ENCODE measurements at regions of chr15 and their contacts with region 1.

Region 1: GRCh38 chr15:65245096-65245856 is 34.0 kb upstream of the CILP start:
- DNase-seq: no peak
- H3K4me3 Mint-ChIP-seq: no peak overlapping the region
- H3K27ac Mint-ChIP-seq: no peak overlapping the region
- H3K4me1 Mint-ChIP-seq: peaks cover 12% of the 10 kb centered on the region
- H3K27me3 Mint-ChIP-seq: no peaks in the 10 kb centered on the region

Region 2: DNA sequence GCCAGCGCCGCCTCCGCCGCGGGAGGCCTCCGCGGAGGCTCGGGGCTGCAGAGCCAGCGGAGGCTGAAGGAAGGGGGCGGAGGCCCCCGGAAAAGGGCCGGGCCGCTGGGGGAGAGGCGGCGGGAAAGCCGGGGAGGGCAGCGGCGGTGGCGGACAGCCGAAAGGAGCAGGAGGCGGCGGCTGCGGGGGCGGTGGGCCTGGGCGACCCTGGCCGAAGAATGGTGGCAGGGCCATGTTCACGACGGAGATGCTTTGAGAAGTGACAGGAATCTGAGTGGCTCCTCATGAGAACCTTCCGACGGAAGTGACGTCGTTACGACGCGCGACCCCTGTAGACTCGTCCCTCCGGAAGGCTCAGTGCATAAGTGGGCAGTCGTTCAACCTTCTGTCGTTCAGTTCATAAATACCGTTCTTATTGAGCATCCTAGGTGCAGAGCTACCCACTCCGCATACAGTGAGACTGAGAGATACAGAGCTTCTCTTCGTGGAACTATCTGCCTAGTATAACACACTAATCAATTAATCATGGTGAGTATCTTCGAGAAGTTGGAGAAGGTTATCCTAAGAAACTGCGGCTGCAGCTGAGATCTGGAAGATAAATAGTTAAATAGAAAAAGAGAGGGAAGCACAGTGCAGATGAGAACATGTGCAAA is 111.6 kb before region 1 on chr15 and contains the start of gene PDCD7:
- intact Hi-C with region 1: loop called (anchors 1 kb)
- DNase-seq: peak; percentile 80
- H3K4me3 Mint-ChIP-seq: peak within 1 kb of the TSS; percentile 92
- H3K27ac Mint-ChIP-seq: peak within 1 kb of the TSS; percentile 93
- H3K4me1 Mint-ChIP-seq: peaks cover 31% of the 10 kb centered on the region
- H3K27me3 Mint-ChIP-seq: peaks cover 2% of the 10 kb centered on the region
- total RNA-seq, gene PDCD7: 51.2 and 54.7 TPM in 2 replicates

Region 3: DNA sequence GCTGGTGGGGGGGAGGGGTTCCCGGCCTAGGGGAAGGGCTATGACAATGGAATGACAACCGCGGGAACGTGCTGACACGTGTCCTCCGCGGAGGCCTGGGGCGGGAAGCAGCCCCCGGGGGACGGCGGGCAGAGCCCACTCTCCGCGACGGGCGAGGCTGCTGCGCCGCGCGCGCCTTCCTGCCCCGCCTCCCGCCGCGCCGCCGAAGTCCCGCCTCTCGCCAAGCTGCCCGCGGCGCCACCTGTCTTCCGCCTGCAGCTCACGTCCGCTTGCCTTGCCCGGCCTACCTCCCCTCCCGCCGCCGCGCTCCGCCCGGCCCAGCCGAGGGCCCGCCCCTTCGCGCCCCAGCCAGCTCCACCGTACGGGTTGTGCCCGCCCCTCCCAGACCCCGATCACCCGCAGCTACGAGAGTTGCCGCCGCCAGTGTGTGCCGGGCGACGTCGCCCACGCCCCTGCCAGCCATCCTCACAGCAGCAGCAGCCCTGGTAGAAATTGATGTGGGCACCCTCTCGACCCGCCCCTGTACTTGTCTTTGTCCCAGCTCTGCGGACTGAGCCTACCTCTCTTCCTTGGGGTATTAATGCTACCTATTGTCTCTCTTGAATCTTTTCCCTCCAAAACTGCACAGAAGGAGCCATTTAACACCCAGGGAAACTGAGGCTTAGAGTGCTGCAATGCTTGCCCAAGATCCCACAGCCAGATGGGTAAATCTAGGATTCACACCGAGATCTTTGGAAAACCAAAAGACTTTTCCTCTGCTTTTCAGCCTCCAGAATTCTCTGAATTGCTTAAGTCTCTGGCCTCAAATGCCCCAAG is 41.6 kb after region 1 on chr15 and contains the start of gene PARP16:
- intact Hi-C with region 1: loop called (anchors 5 kb)
- DNase-seq: peak; percentile 90
- H3K4me3 Mint-ChIP-seq: peak within 1 kb of the TSS; percentile 86
- H3K27ac Mint-ChIP-seq: peak within 1 kb of the TSS; percentile 76
- H3K4me1 Mint-ChIP-seq: peaks cover 27% of the 10 kb centered on the region
- H3K27me3 Mint-ChIP-seq: no peaks in the 10 kb centered on the region
- total RNA-seq, gene PARP16: 12.4 and 14.0 TPM in 2 replicates

Region 4: GRCh38 chr15:65509321-65509720 is 264.0 kb after region 1 on chr15:
- intact Hi-C with region 1: no loop called
- DNase-seq: no peak
- H3K4me3 Mint-ChIP-seq: no peak overlapping the region
- H3K27ac Mint-ChIP-seq: peak overlapping the region; percentile 4
- H3K4me1 Mint-ChIP-seq: peaks cover 22% of the 10 kb centered on the region
- H3K27me3 Mint-ChIP-seq: no peaks in the 10 kb centered on the region

Region 5: GRCh38 chr15:66097151-66098021 is 852.1 kb after region 1 on chr15:
- intact Hi-C with region 1: no loop called
- DNase-seq: no peak
- H3K4me3 Mint-ChIP-seq: no peak overlapping the region
- H3K27ac Mint-ChIP-seq: no peak overlapping the region
- H3K4me1 Mint-ChIP-seq: no peaks in the 10 kb centered on the region
- H3K27me3 Mint-ChIP-seq: peaks cover 13% of the 10 kb centered on the region